IMR-90 (cell line): ENCODE measurements at regions of chrX and their contacts with region 1.

Region 1: GRCh38 chrX:31266172-31267076 is 194.6 kb upstream of the FTHL17 start:
- DNase-seq: no peak
- ATAC-seq: peak; percentile 94
- H3K4me3 ChIP-seq: peak overlapping the region; percentile 99
- H3K27ac ChIP-seq: peak overlapping the region; percentile 69; the same call in 1 of the 2 replicates
- H3K4me1 ChIP-seq: no peaks in the 10 kb centered on the region
- H3K27me3 ChIP-seq: peaks cover 3% of the 10 kb centered on the region
- CTCF ChIP-seq: no peak
- POLR2A ChIP-seq: no peak
- RAD21 ChIP-seq: no peak

Region 2: GRCh38 chrX:31233941-31234496 is 32.4 kb before region 1 on chrX:
- CTCF ChIA-PET with region 1: no interaction called
- POLR2A ChIA-PET with region 1: interaction called, 14 read pairs
- dilution Hi-C with region 1: no loop called
- in situ Hi-C with region 1: no loop called
- intact Hi-C with region 1: no loop called
- DNase-seq: no peak
- ATAC-seq: no peak
- H3K4me3 ChIP-seq: no peak overlapping the region
- H3K27ac ChIP-seq: no peak overlapping the region
- H3K4me1 ChIP-seq: no peaks in the 10 kb centered on the region
- H3K27me3 ChIP-seq: no peaks in the 10 kb centered on the region
- CTCF ChIP-seq: no peak
- POLR2A ChIP-seq: no peak
- RAD21 ChIP-seq: no peak

Region 3: DNA sequence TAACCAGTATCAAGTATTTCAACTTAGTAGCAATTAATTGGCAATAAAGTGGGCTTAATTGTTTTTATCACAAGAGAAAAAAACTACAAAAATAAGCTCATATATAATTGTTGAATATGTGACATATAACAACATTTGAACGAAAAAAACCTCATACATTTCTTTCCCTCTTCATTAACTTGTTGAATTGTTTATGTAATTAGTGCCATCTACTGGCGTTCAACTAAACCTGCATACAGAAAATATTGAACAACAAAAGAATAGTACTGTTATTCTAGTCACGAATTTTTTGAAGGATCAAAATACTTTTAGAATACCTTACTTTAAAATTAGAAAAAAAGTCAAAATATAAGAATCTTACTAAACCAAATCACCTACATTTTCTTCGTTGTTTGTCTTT is 391.9 kb after region 1 on chrX:
- CTCF ChIA-PET with region 1: no interaction called
- POLR2A ChIA-PET with region 1: no interaction called
- dilution Hi-C with region 1: no loop called
- in situ Hi-C with region 1: no loop called
- intact Hi-C with region 1: loop called (anchors 2 kb)
- DNase-seq: peak; percentile 49
- ATAC-seq: no peak
- H3K4me3 ChIP-seq: no peak overlapping the region
- H3K27ac ChIP-seq: no peak overlapping the region
- H3K4me1 ChIP-seq: no peaks in the 10 kb centered on the region
- H3K27me3 ChIP-seq: no peaks in the 10 kb centered on the region; the same call in 1 of the 2 replicates
- CTCF ChIP-seq: peak; percentile 63
- POLR2A ChIP-seq: no peak
- RAD21 ChIP-seq: peak; percentile 67